HEK293 (cell line): ENCODE measurements at regions of chr5 and their contacts with region 1.

Region 1: DNA sequence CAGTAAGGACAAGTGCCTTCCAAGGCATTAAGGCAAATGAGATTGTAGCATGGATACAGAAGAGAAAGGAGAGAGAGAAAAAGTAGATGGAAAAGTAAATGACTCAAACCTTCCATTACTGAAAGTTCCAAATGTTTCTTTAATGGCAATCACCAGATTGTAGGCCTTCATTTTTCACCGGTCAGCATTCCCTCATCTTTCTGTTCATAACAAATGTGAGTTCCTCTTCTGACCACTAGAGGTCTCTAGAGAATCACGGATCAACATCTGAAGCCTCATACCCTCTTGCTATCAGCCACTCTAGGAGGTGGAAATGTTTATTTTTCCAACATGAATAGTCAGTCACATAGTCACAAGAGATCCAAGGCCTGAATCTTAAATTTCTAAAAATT is 73.6 kb upstream of the RPS23 start:
- H3K4me3 ChIP-seq: no peak overlapping the region
- H3K27ac ChIP-seq: no peak overlapping the region
- H3K4me1 ChIP-seq: no peaks in the 10 kb centered on the region
- CTCF ChIP-seq: no peak; the same call in 1 of the 2 replicates

Region 2: DNA sequence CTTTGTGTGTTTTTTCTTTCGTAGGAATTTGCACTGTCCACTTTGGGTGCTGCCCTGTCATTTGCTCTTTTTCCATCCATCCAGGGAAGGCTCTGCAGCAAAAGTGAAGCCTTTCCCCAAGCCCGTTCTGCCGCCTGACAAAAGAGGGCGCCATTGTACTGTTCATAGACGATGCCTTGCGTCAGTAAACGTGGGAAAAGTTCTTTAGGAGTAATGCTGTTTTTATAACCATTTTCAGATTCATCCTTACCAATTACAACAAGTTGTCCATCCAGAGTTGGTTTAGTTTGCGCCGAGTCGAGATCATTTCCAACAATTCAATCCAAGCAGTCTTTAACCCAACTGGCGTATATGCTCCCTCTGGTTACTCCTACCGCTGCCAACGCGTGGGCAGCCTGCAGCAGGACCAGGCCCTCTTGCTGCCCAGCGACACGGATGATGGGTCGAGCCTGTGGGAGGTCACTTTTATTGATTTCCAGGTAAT is 39.3 kb before region 1 on chr5:
- CTCF ChIA-PET with region 1: interaction called, 20 read pairs
- POLR2A ChIA-PET with region 1: no interaction called
- H3K4me3 ChIP-seq: no peak overlapping the region
- H3K27ac ChIP-seq: no peak overlapping the region
- H3K4me1 ChIP-seq: peaks cover 9% of the 10 kb centered on the region
- CTCF ChIP-seq: peak; percentile 79